B cell (primary cell): ENCODE measurements at regions of chr3 and their contacts with region 1.

Region 1: GRCh38 chr3:141441381-141442364 is 45.2 kb upstream of the RASA2 start:
- DNase-seq: peak; percentile 83
- ATAC-seq: peak; percentile 99
- H3K4me3 ChIP-seq: no peak overlapping the region
- H3K4me3 Mint-ChIP-seq: peak overlapping the region; percentile 45
- H3K27ac ChIP-seq: no peak overlapping the region
- H3K27ac Mint-ChIP-seq: peak overlapping the region; percentile 51
- H3K4me1 ChIP-seq: peaks cover 10 to 15% of the 10 kb centered on the region in 2 donors
- H3K4me1 Mint-ChIP-seq: peaks cover 24% of the 10 kb centered on the region
- H3K27me3 ChIP-seq: no peaks in the 10 kb centered on the region
- H3K27me3 Mint-ChIP-seq: no peaks in the 10 kb centered on the region
- CTCF ChIP-seq: peak; percentile 90

Region 2: DNA sequence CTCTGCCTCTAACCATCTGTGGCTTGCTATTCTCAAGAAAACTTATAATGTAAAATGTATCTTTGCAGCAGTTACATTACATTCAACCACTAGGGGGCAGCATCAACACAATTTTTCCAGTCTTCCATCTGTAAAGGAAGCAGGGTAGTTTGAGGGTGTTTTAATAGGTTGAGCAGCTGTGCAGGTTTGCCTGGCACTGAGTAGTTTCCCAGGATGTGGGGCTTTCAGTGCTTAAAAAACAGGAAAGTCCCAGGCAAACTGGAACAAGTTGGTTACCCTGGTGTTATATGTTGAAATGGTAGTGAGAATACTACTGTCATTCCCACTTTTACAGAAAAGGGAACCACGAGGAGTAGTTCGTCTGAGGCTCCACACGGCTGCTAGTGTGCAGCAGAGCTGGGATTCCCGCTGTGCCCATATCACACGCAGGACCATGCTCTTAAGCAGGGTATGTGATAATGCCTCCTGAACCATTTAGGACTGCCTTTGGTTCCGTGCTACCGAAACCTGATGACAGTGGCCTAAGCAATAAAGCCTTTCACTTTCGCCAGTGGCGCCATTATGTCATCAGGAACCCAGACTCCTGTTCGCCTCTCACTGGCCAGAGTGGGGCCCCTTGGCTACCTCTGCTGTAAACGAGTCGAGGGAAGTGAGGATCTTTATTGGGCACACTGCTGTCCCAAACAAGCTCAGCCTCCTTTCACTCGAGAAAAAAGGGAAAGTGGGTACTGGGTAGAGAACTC is 138.0 kb before region 1 on chr3:
- CTCF ChIA-PET with region 1: interaction called, 16 read pairs
- POLR2A ChIA-PET with region 1: no interaction called
- intact Hi-C with region 1: no loop called
- DNase-seq: peak; percentile 83
- ATAC-seq: peak; percentile 78
- H3K4me3 ChIP-seq: no peak overlapping the region
- H3K4me3 Mint-ChIP-seq: no peak overlapping the region
- H3K27ac ChIP-seq: no peak overlapping the region
- H3K27ac Mint-ChIP-seq: no peak overlapping the region
- H3K4me1 ChIP-seq: peaks cover 0 to 5% of the 10 kb centered on the region in 2 donors
- H3K4me1 Mint-ChIP-seq: no peaks in the 10 kb centered on the region
- H3K27me3 ChIP-seq: no peaks in the 10 kb centered on the region
- H3K27me3 Mint-ChIP-seq: no peaks in the 10 kb centered on the region
- CTCF ChIP-seq: peak; percentile 84

Region 3: GRCh38 chr3:141370065-141370533 is 71.6 kb before region 1 on chr3:
- CTCF ChIA-PET with region 1: interaction called, 15 read pairs
- POLR2A ChIA-PET with region 1: interaction called, 7 read pairs
- intact Hi-C with region 1: loop called (anchors 1 kb)
- DNase-seq: peak; percentile 91
- ATAC-seq: peak; percentile 98
- H3K4me3 ChIP-seq: no peak overlapping the region
- H3K4me3 Mint-ChIP-seq: peak overlapping the region; percentile 5
- H3K27ac ChIP-seq: peak overlapping the region in 1 of 2 donors; percentile 42
- H3K27ac Mint-ChIP-seq: peak overlapping the region; percentile 62
- H3K4me1 ChIP-seq: peaks cover 4 to 8% of the 10 kb centered on the region in 2 donors
- H3K4me1 Mint-ChIP-seq: peaks cover 20% of the 10 kb centered on the region
- H3K27me3 ChIP-seq: no peaks in the 10 kb centered on the region
- H3K27me3 Mint-ChIP-seq: no peaks in the 10 kb centered on the region
- CTCF ChIP-seq: peak; percentile 69

Region 4: DNA sequence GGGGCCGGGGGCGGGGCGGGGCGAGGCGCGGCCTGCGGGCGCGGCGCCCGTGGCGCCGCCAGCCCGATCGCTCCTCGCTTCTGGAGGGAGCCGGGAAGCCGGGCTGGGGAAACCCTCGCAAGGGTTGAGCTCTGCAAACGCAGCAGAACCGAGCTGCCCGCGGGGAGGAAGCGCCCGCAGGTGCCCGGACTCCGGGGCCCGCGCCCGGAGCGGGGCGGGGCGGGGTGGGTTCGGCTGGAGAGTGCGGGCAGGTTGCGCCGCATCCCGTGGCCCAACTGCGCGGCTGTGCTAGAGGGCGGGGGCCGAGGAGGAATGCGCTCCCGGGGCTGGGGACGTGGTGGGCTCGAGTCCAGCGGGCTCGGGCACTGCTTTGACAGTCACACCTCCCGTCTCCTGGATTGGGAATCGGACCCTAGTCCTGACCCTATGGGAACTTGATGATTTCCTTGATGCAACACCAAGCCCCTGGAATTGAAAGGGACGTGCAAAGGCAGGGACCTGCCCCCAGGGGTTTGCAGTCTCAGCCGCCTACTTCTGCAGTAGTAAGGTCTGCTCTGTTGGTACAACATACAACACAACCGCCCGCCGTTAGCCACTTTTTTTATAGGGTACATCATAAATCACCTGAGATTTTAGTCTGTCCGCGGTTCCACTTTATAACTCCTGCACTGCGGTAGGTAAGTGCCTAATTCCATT is 39.0 kb before region 1 on chr3:
- CTCF ChIA-PET with region 1: interaction called, 7 read pairs
- POLR2A ChIA-PET with region 1: no interaction called
- intact Hi-C with region 1: loop called (anchors 2 kb)
- DNase-seq: no peak
- ATAC-seq: peak; percentile 61
- H3K4me3 ChIP-seq: peak overlapping the region; percentile 37 to 83 (median 78)
- H3K4me3 Mint-ChIP-seq: peak overlapping the region; percentile 95
- H3K27ac ChIP-seq: peak overlapping the region; percentile 35 to 90
- H3K27ac Mint-ChIP-seq: peak overlapping the region; percentile 98
- H3K4me1 ChIP-seq: peaks cover 8 to 14% of the 10 kb centered on the region in 2 donors
- H3K4me1 Mint-ChIP-seq: peaks cover 48% of the 10 kb centered on the region
- H3K27me3 ChIP-seq: no peaks in the 10 kb centered on the region
- H3K27me3 Mint-ChIP-seq: no peaks in the 10 kb centered on the region
- CTCF ChIP-seq: no peak

Region 5: GRCh38 chr3:141426404-141427034 is 15.2 kb before region 1 on chr3:
- CTCF ChIA-PET with region 1: interaction called, 18 read pairs
- POLR2A ChIA-PET with region 1: no interaction called
- intact Hi-C with region 1: no loop called
- DNase-seq: no peak
- ATAC-seq: no peak
- H3K4me3 ChIP-seq: no peak overlapping the region
- H3K4me3 Mint-ChIP-seq: no peak overlapping the region
- H3K27ac ChIP-seq: no peak overlapping the region
- H3K27ac Mint-ChIP-seq: no peak overlapping the region
- H3K4me1 ChIP-seq: no peaks in the 10 kb centered on the region
- H3K4me1 Mint-ChIP-seq: peaks cover 3% of the 10 kb centered on the region
- H3K27me3 ChIP-seq: no peaks in the 10 kb centered on the region
- H3K27me3 Mint-ChIP-seq: no peaks in the 10 kb centered on the region
- CTCF ChIP-seq: no peak

Region 6: GRCh38 chr3:141575879-141576743 is 134.4 kb after region 1 on chr3:
- CTCF ChIA-PET with region 1: no interaction called
- POLR2A ChIA-PET with region 1: no interaction called
- intact Hi-C with region 1: no loop called
- DNase-seq: peak; percentile 44
- ATAC-seq: peak; percentile 47
- H3K4me3 ChIP-seq: no peak overlapping the region
- H3K4me3 Mint-ChIP-seq: no peak overlapping the region
- H3K27ac ChIP-seq: peak overlapping the region in 1 of 2 donors; percentile 10
- H3K27ac Mint-ChIP-seq: peak overlapping the region; percentile 62
- H3K4me1 ChIP-seq: peaks cover 0 to 3% of the 10 kb centered on the region in 2 donors
- H3K4me1 Mint-ChIP-seq: peaks cover 6% of the 10 kb centered on the region
- H3K27me3 ChIP-seq: no peaks in the 10 kb centered on the region
- H3K27me3 Mint-ChIP-seq: no peaks in the 10 kb centered on the region
- CTCF ChIP-seq: peak; percentile 70